Left cardiac atrium (tissue), 4 donors: ENCODE measurements at regions of chr1 and their contacts with region 1.

Region 1: GRCh38 chr1:206982216-206982615 is 12.0 kb upstream of the FCAMR start:
- DNase-seq: peak; percentile 35
- ATAC-seq: peak; percentile 63 to 86

Region 2: DNA sequence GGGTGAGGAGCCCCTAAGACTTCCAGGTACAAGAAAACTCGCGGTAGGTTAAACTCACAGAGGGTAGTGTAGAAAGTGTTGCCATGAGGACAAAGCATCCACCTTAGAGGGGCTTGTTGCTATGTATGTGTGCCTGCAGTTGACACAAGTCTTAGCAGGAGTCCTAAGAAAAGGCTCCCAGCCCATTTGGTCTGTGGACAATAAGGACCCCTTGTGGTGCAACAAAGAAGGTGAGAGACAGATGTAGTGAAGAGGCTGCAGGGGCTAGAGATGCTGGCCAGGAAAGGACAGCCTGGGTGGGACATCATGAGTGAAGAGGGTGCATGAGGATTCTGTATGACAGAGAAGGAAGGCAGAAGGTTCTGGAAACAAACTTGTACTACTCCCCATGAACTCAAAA is 173.6 kb before region 1 on chr1:
- intact Hi-C with region 1: loop called in 1 of 2 experiments (anchors 10 kb)
- DNase-seq: no peak
- ATAC-seq: peak; percentile 44 to 70

Region 3: DNA sequence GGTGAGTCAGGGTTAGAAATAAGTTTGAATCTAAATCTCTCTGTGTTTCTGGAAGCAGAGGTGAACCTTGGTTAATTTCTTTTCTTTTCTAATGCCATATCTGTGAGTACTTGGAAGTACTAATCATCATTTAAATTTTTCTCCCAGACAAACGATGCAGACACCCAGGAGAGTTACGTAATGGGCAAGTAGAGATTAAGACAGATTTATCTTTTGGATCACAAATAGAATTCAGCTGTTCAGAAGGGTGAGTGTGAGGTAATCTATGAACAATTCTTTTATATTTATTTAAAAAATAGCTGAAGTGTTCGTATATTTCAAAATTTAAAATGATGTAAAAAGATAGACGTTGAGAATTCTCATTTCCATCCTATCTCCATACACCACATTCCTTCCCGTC is 133.1 kb after region 1 on chr1:
- intact Hi-C with region 1: no loop called
- DNase-seq: no peak
- ATAC-seq: peak in 1 of 2 donors; percentile 43